ENCODE measurements at regions of chr21 and their contacts with region 1.

Region 1: GRCh38 chr21:34888569-34889319 is 160.4 kb downstream of the RUNX1 start:
- DNase-seq: peak; percentile 81
- H3K4me3 Mint-ChIP-seq: peak overlapping the region; percentile 98
- H3K27ac Mint-ChIP-seq: peak overlapping the region; percentile 100
- H3K4me1 Mint-ChIP-seq: peaks cover 36% of the 10 kb centered on the region
- H3K27me3 Mint-ChIP-seq: no peaks in the 10 kb centered on the region

Region 2: DNA sequence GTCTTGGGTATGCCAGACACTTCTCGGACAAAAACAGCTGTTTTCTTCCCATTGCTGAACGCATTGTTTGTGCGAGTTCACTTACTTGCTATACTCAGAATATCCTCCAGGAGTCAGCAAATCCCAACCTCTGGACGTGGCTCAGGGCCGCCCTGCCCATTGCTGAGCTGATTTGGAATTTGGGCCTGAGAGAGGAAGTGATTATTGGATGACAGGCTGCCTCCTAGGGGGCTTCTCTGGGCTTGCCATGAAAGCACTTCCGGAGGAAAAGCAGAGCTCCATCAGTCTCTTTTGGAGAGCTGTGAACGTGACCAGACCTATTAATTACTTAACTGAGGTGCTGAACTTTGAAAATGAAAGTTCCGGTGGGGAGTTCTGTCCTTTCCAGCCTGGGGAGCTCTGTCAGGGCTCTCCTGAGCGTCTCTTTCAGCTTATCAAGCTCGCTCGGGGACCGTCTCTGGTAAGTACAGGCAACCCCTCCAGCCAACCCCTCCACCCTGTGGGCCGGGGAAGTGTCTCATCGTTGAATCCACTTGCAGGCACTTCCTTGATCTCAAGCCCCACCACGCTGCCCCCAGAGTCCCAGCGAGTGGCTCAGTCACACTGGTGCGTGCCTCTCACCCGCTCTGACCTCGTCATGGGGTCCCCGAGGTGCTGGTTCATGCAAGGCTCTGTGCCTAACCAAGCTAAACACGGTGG is 143.0 kb before region 1 on chr21:
- intact Hi-C with region 1: loop called (anchors 5 kb)
- DNase-seq: peak; percentile 46
- H3K4me3 Mint-ChIP-seq: peak overlapping the region; percentile 45
- H3K27ac Mint-ChIP-seq: no peak overlapping the region
- H3K4me1 Mint-ChIP-seq: peaks cover 8% of the 10 kb centered on the region
- H3K27me3 Mint-ChIP-seq: peaks cover 23% of the 10 kb centered on the region

Region 3: DNA sequence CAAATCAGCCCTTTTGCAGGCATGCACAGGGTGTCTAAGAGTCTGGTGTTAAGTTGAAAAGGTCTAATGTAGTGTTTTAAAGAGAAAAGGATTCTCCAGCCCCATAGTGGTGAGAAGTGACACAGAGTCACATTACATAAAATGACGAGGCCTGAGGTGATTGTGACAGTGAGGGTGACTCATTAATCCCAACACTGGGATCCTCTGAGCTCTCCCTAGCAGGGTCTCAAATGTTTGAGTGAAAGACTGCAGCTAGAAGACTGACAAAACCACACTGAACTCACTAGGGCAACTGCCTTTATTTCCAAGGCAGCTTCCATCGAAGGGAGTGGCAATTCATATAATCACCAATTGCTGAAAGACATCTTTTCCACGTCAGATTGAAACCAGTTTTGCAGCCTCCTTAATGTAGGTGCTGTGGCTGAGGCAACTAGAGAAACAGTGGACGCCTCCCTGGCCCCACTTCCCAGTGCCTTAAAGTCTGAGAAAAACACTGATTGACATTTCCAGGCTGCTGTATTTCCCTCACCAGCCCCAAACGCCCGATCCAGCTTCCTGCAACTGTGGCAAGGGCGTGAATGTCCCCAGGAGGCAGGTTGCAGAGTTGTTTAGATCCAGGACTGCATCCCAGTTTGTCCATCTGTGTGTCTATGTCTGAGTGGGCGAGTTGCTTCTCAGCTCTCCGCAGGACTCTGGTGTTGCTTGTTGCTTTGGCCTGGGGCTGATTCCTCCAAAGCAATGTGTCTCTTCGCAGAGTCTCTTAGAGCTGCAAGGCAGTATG is 79.0 kb after region 1 on chr21:
- intact Hi-C with region 1: loop called (anchors 2 kb)
- DNase-seq: peak; percentile 41
- H3K4me3 Mint-ChIP-seq: peak overlapping the region; percentile 69
- H3K27ac Mint-ChIP-seq: peak overlapping the region; percentile 99
- H3K4me1 Mint-ChIP-seq: peaks cover 82% of the 10 kb centered on the region
- H3K27me3 Mint-ChIP-seq: no peaks in the 10 kb centered on the region

Region 4: DNA sequence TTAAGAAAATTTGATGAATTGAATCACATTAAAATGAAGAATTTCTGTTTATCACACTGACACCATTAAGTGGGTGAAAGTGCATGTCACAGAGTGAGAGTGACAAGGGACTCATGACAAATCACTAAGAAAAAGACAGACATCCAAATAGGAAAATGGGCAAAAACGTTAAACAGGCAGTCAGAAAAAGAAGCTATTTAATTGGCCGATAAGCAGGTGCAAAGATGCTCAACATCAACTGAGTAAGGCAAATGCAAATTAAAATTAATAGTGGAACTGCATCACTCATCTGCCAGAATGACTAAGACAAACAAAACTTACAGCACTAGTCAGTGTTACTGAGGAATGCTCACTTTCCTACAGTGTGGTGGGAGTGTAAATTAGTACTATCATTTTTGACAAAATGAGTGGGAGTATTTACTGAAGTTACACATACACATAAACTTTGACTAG is 199.6 kb after region 1 on chr21:
- intact Hi-C with region 1: loop called (anchors 2 kb)
- DNase-seq: no peak
- H3K4me3 Mint-ChIP-seq: no peak overlapping the region
- H3K27ac Mint-ChIP-seq: peak overlapping the region; percentile 85
- H3K4me1 Mint-ChIP-seq: peaks cover 52% of the 10 kb centered on the region
- H3K27me3 Mint-ChIP-seq: no peaks in the 10 kb centered on the region

Region 5: GRCh38 chr21:35226948-35227744 is 338.4 kb after region 1 on chr21:
- intact Hi-C with region 1: loop called (anchors 5 kb)
- DNase-seq: peak; percentile 52
- H3K4me3 Mint-ChIP-seq: peak overlapping the region; percentile 37
- H3K27ac Mint-ChIP-seq: peak overlapping the region; percentile 72
- H3K4me1 Mint-ChIP-seq: peaks cover 52% of the 10 kb centered on the region
- H3K27me3 Mint-ChIP-seq: no peaks in the 10 kb centered on the region

Region 6: DNA sequence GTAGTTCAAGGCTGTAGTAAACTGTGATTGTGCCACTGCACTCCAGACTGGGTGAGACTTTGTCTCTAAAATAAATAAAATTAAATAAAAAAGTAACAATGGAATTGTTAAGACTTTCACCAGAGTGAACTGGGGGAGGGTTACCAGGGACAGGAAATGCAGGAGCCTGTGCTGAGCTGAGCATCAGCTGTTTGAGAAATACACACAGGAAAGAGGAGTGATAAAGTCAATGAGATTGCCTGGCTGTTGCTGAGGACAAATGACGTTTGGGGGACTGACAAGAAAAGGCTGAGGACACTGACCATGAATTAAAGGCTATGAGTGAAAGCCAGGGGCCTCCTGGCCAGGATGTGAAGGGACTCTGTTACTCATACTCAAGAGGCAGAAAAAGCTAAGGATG is 945.2 kb after region 1 on chr21:
- intact Hi-C with region 1: loop called (anchors 10 kb)
- DNase-seq: no peak
- H3K4me3 Mint-ChIP-seq: no peak overlapping the region
- H3K27ac Mint-ChIP-seq: no peak overlapping the region
- H3K4me1 Mint-ChIP-seq: peaks cover 2% of the 10 kb centered on the region
- H3K27me3 Mint-ChIP-seq: peaks cover 14% of the 10 kb centered on the region